PC-9 (cell line): ENCODE measurements at regions of chr4 and their contacts with region 1.

Region 1: GRCh38 chr4:138090150-138090917 is 151.8 kb downstream of the SLC7A11 start:
- DNase-seq: peak; percentile 60 to 61
- H3K4me3 ChIP-seq: peak overlapping the region; percentile 36; the same call in 1 of the 2 replicates
- H3K27ac ChIP-seq: no peak overlapping the region
- H3K4me1 ChIP-seq: no peaks in the 10 kb centered on the region
- H3K27me3 ChIP-seq: no peaks in the 10 kb centered on the region
- CTCF ChIP-seq: peak; percentile 79

Region 2: GRCh38 chr4:137124278-137124932 is 965.9 kb before region 1 on chr4:
- CTCF ChIA-PET with region 1: interaction called, 6 read pairs
- POLR2A ChIA-PET with region 1: no interaction called
- intact Hi-C with region 1: loop called (anchors 1 kb)
- DNase-seq: peak; percentile 1 to 36
- H3K4me3 ChIP-seq: peak overlapping the region; percentile 56; the same call in 1 of the 2 replicates
- H3K27ac ChIP-seq: no peak overlapping the region
- H3K4me1 ChIP-seq: no peaks in the 10 kb centered on the region
- H3K27me3 ChIP-seq: no peaks in the 10 kb centered on the region
- CTCF ChIP-seq: peak; percentile 62

Region 3: DNA sequence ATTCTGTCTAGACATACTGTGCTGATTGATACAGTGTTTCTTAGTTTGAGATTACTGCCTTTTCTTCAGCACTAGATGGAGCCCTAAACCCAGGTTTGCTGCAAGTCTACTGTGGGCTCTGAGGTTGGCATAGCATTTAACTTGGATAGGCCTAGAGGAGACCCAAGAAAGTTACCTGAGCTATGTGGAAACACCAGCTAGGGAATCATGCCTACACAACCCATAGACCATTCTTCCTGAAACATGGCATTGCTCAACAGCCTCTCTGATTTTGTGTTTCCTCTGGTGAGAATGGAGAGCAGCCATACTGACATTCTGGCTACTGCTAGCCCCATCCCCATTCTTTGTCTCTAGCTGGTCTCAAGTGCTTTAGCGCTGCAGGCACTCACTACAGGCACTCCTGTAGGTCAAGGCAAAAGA is 270.4 kb before region 1 on chr4:
- CTCF ChIA-PET with region 1: interaction called, 3 read pairs
- POLR2A ChIA-PET with region 1: no interaction called
- intact Hi-C with region 1: loop called (anchors 1 kb)
- DNase-seq: peak; percentile 12 to 37
- H3K4me3 ChIP-seq: no peak overlapping the region
- H3K27ac ChIP-seq: no peak overlapping the region
- H3K4me1 ChIP-seq: no peaks in the 10 kb centered on the region
- H3K27me3 ChIP-seq: no peaks in the 10 kb centered on the region
- CTCF ChIP-seq: peak; percentile 69

Region 4: GRCh38 chr4:138003248-138003647 is 87.1 kb before region 1 on chr4:
- CTCF ChIA-PET with region 1: no interaction called
- POLR2A ChIA-PET with region 1: no interaction called
- intact Hi-C with region 1: no loop called
- DNase-seq: no peak
- H3K4me3 ChIP-seq: no peak overlapping the region
- H3K27ac ChIP-seq: no peak overlapping the region
- H3K4me1 ChIP-seq: no peaks in the 10 kb centered on the region
- H3K27me3 ChIP-seq: no peaks in the 10 kb centered on the region
- CTCF ChIP-seq: no peak

Region 5: DNA sequence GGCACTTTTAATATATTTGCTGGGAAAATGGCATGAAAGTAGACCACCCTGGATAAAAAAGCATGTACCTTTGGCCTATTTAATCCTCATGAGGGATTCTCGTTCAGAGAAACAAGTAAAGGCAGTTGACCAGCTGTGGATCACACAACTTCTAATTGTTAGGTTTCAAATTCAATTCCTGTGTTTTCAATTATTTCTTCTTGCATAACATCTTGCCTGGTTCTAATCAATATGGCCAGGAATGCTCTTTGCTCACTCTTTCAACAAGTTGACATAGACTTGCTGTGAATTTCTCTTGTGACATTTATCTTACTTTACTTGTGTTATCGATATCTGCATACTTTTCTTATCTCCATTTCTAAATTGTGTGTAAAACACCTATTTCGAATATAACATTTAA is 60.0 kb before region 1 on chr4:
- CTCF ChIA-PET with region 1: interaction called, 17 read pairs
- POLR2A ChIA-PET with region 1: interaction called, 12 read pairs
- intact Hi-C with region 1: loop called (anchors 1 kb)
- DNase-seq: no peak
- H3K4me3 ChIP-seq: no peak overlapping the region
- H3K27ac ChIP-seq: no peak overlapping the region
- H3K4me1 ChIP-seq: peaks cover 8% of the 10 kb centered on the region
- H3K27me3 ChIP-seq: no peaks in the 10 kb centered on the region
- CTCF ChIP-seq: no peak

Region 6: GRCh38 chr4:138414202-138414601 is 323.9 kb after region 1 on chr4:
- CTCF ChIA-PET with region 1: no interaction called
- POLR2A ChIA-PET with region 1: no interaction called
- intact Hi-C with region 1: no loop called
- DNase-seq: no peak
- H3K4me3 ChIP-seq: no peak overlapping the region
- H3K27ac ChIP-seq: no peak overlapping the region
- H3K4me1 ChIP-seq: no peaks in the 10 kb centered on the region
- H3K27me3 ChIP-seq: no peaks in the 10 kb centered on the region
- CTCF ChIP-seq: no peak

Region 7: GRCh38 chr4:138494931-138495330 is 404.6 kb after region 1 on chr4:
- CTCF ChIA-PET with region 1: interaction called, 4 read pairs
- POLR2A ChIA-PET with region 1: no interaction called
- intact Hi-C with region 1: loop called (anchors 10 kb)
- DNase-seq: peak in 1 of 2 experiments; percentile 41
- H3K4me3 ChIP-seq: no peak overlapping the region
- H3K27ac ChIP-seq: no peak overlapping the region
- H3K4me1 ChIP-seq: no peaks in the 10 kb centered on the region
- H3K27me3 ChIP-seq: no peaks in the 10 kb centered on the region
- CTCF ChIP-seq: 0 out of 2 replicates have a peak, but pooled peaks have one; percentile 31